MCF 10A (cell line): ENCODE measurements at regions of chr19 and their contacts with region 1.

Region 1: DNA sequence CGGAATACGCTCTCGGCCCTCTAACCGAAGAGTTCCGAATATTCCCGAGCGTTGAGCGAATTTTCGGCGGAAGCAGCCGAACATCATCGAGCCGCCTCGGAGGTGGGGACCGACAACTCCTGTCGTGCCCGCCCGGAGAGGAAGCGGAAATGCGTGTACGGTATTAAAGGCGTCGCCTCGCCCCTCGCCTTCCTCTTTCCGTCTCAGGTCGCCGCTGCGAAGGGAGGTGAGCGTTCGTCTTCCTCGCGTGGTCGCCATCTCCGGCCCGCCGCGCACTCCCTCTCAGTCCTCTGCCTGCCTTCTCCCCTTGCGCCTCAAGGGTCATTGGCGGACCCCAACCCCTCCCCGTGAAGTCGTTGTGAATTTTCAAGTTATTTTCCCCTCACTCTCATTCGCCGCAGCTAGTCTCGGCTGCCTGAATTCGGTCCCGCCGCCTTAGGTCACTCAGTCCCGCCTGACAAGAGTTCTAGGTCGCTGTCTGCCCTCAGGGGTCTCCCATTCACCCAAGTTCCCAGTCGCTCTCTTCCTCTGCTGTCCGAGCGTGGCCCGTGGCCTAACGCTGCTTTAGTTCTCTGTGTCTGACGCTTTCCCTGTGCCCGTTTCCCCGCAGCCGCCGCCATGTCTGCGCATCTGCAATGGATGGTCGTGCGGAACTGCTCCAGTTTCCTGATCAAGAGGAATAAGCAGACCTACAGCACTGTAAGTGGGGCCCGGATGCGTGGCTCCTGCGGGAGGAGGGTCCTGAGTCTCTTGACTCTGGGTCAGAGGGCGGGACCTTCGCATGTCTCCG is at the start of gene RPL28:
- DNase-seq: peak; percentile 99
- H3K4me3 Mint-ChIP-seq: peak within 1 kb of the TSS; percentile 89
- H3K27ac Mint-ChIP-seq: peak within 1 kb of the TSS; percentile 93
- H3K4me1 Mint-ChIP-seq: peaks cover 42% of the 10 kb centered on the region
- H3K27me3 Mint-ChIP-seq: no peaks in the 10 kb centered on the region
- CTCF ChIP-seq: no peak
- total RNA-seq, gene RPL28: 2,816 and 2,868 TPM in 2 replicates

Region 2: DNA sequence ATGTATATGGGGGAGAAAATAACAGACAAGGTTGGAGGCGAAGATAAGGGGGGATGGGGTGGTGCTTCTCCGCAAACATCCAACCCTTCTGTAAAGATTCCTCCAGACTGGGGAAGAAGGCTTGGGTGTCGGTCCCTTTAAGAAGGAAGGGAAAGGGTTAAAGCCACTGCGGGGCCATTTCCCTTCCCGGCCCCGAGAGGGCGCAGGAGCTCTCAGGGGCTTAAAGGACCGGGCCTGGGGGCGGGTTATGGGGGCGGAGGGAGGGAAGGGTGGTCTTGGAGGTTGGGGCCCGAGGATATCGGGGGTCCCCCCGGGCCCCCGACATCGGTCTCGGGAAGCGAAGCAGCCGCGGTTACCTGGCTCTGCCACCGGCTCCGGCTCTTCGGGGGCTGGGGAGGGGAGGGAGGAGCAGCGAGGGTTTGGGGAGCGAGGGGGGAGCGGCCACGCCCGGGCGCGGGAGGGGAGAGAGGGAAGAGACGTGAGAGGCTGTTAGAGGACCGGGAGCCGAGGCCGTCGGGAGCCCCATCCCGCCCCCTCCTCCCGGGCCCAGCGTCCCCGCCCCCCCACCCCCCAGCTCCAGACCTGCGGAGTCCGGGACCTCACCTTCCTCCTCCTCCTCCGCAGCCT is 239.7 kb before region 1 on chr19:
- CTCF ChIA-PET with region 1: interaction called, 22 read pairs
- POLR2A ChIA-PET with region 1: no interaction called
- intact Hi-C with region 1: no loop called
- DNase-seq: peak; percentile 51
- H3K4me3 Mint-ChIP-seq: peak overlapping the region; percentile 69
- H3K27ac Mint-ChIP-seq: no peak overlapping the region
- H3K4me1 Mint-ChIP-seq: peaks cover 14% of the 10 kb centered on the region
- H3K27me3 Mint-ChIP-seq: peaks cover 24% of the 10 kb centered on the region
- CTCF ChIP-seq: peak; percentile 81

Region 3: DNA sequence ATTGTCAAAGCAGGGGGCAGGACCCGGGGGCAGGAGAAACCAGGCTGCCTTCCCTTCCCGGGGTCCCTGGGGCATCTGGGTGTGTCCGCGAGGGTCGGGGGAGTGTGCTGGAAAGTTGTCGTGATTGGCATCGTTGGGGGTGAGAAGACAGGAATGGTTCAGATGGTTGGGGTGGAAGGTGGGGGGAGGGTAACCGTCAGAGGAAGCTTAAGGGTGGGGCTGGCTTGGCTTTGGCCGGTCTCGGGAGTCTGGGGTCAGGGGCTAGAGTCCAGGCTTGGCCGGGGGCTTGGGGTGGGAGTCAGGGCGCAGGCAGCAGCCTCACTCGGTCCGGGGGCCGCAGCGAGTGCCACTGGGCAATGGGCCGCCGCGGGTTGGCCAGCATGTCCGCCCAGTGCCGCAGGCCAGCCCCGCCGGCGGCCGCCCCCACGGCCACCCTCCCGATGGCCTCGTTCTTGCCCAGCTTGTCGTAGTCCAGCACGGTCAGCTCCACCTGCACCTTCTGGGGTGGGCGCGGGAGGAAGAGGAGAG is 212.7 kb before region 1 on chr19:
- CTCF ChIA-PET with region 1: no interaction called
- POLR2A ChIA-PET with region 1: no interaction called
- intact Hi-C with region 1: no loop called
- DNase-seq: no peak
- H3K4me3 Mint-ChIP-seq: peak overlapping the region; percentile 74
- H3K27ac Mint-ChIP-seq: peak overlapping the region; percentile 68
- H3K4me1 Mint-ChIP-seq: peaks cover 11% of the 10 kb centered on the region
- H3K27me3 Mint-ChIP-seq: no peaks in the 10 kb centered on the region
- CTCF ChIP-seq: no peak

Region 4: DNA sequence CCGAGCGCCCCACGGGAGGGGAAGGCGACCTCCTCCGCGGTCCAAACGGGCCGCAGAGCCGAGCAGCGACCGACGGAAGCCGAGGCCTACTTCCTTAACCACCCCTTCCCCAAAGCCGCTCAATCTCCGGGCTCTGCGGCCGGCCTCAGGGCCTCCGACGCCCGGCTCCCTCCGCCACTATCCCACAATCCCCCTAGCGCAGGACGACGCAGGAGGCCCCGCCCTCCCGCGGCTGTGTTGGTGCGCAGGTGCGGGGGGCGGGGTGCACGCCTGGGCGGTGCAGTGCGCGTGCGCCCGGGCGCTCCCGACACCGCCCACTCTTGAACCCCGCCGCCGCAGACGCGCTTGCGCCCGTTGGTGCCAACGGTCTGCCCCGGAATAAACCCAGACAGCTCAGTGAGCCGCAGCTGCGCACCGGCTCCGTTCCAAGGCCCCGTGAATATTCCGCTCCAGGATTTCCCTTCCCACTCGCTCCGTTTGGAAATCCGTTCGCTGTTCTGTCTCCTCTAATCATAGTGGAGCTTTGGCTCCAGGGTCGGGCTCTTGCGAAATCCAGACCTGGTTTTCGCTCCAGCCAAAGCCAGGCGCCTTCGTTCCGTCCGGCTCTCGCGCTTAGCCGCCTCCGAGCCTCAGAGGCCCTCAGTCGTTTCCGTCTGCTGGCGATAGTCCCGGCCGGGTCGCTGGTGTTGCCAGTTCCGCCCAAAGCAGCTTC is 127.0 kb before region 1 on chr19 and contains the start of gene PPP6R1:
- CTCF ChIA-PET with region 1: no interaction called
- POLR2A ChIA-PET with region 1: interaction called, 16 read pairs
- intact Hi-C with region 1: no loop called
- DNase-seq: peak; percentile 99
- H3K4me3 Mint-ChIP-seq: peak within 1 kb of the TSS; percentile 88
- H3K27ac Mint-ChIP-seq: peak within 1 kb of the TSS; percentile 92
- H3K4me1 Mint-ChIP-seq: peaks cover 34% of the 10 kb centered on the region
- H3K27me3 Mint-ChIP-seq: no peaks in the 10 kb centered on the region
- CTCF ChIP-seq: no peak
- total RNA-seq, gene PPP6R1: 70.6 and 78.9 TPM in 2 replicates

Region 5: GRCh38 chr19:55289117-55289796 is 96.7 kb before region 1 on chr19:
- CTCF ChIA-PET with region 1: interaction called, 61 read pairs
- POLR2A ChIA-PET with region 1: interaction called, 13 read pairs
- intact Hi-C with region 1: loop called (anchors 2 kb)
- DNase-seq: no peak
- H3K4me3 Mint-ChIP-seq: no peak overlapping the region
- H3K27ac Mint-ChIP-seq: no peak overlapping the region
- H3K4me1 Mint-ChIP-seq: peaks cover 5% of the 10 kb centered on the region
- H3K27me3 Mint-ChIP-seq: no peaks in the 10 kb centered on the region
- CTCF ChIP-seq: no peak

Region 6: DNA sequence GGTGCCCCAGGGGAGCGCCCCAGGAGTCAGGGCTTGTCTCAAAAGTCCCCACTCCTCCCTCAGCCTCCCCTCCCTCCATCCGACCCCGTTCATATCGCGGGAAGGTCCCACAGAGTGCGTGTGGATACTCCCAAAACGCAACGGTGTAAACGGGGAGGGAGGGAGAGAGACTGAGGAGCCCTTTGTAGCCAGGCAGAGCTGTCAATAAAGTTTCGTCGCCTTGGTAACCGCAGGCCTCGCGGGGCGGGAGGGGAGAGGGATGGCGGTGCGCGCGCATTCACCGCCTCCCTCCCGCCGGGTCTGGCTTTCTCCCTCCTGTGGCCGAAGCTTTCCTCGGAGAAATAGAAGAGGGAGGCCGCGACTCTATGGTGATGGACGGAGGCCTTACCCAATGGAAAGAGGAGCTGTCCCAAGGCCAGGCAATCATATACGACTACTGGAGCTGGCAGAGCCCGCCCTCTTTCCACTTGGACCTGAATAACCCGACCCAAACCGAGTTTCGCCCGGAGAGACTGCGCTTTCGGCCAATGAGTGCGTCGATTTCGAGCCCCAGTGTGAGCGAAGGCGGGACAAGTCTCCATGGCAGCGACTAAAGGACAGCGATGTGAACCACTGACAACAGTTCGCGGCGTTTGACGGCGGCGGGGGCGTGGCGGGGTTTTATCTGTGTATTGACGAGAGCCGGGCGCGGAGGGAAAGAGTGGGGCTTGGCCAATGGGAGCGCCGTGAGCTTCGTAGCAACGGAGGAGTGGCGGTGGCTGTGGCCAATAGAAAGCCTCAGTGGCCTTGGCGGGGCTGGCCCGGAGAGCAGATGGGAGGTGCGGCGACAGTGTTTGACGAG is 46.7 kb before region 1 on chr19 and contains the start of gene KMT5C:
- CTCF ChIA-PET with region 1: interaction called, 4 read pairs
- POLR2A ChIA-PET with region 1: interaction called, 98 read pairs
- intact Hi-C with region 1: loop called (anchors 1 kb)
- DNase-seq: peak; percentile 100
- H3K4me3 Mint-ChIP-seq: peak within 1 kb of the TSS; percentile 80
- H3K27ac Mint-ChIP-seq: peak within 1 kb of the TSS; percentile 100
- H3K4me1 Mint-ChIP-seq: peaks cover 33% of the 10 kb centered on the region
- H3K27me3 Mint-ChIP-seq: no peaks in the 10 kb centered on the region
- CTCF ChIP-seq: no peak
- total RNA-seq, gene KMT5C: 12.9 and 16.8 TPM in 2 replicates

Region 7: GRCh38 chr19:55407800-55408532 is 22.0 kb after region 1 on chr19:
- CTCF ChIA-PET with region 1: interaction called, 4 read pairs
- POLR2A ChIA-PET with region 1: interaction called, 57 read pairs
- intact Hi-C with region 1: no loop called
- DNase-seq: peak; percentile 100
- H3K4me3 Mint-ChIP-seq: peak overlapping the region; percentile 94
- H3K27ac Mint-ChIP-seq: peak overlapping the region; percentile 99
- H3K4me1 Mint-ChIP-seq: peaks cover 21% of the 10 kb centered on the region
- H3K27me3 Mint-ChIP-seq: no peaks in the 10 kb centered on the region
- CTCF ChIP-seq: no peak

Region 8: DNA sequence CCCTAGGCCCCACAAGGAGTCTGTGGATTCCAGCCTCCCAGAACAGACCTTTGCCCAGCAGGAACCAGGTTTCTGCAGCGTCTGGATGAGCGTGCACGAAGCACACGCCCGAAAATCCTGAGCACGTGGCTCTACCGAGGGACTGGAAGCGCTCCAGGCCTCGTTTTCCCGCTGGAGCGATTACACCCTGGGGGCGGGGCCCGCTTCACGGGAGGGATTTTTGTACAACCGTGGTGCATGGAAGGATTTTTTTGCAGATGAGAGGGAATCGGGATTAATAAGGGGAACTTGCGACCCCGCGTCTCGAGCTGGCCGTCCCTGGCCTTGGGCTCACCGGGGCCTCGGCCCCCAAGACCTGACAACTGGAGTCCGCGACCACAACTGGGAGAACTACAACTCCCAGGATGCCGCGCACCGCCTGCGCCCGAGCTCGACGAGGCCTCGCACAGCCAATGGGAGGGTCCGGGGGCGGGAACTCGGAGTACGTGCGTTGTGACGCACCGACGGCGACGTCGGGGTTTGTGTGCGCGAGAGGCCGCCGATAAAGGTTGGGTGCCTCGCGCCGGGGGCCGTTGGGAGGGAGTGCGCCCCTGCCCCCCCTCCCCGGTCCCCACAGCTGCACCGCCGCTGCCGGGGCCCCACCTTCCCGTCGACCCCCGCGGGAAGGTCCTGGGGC is 90.3 kb after region 1 on chr19 and contains the start of gene ZNF628:
- CTCF ChIA-PET with region 1: interaction called, 3 read pairs
- POLR2A ChIA-PET with region 1: interaction called, 10 read pairs
- intact Hi-C with region 1: no loop called
- DNase-seq: peak; percentile 99
- H3K4me3 Mint-ChIP-seq: peak within 1 kb of the TSS; percentile 89
- H3K27ac Mint-ChIP-seq: peak within 1 kb of the TSS; percentile 91
- H3K4me1 Mint-ChIP-seq: peaks cover 33% of the 10 kb centered on the region
- H3K27me3 Mint-ChIP-seq: no peaks in the 10 kb centered on the region
- CTCF ChIP-seq: no peak
- total RNA-seq, gene ZNF628: 6.2 and 12.1 TPM in 2 replicates